ENCODE measurements at regions of chr12 and their contacts with region 1.

Region 1: DNA sequence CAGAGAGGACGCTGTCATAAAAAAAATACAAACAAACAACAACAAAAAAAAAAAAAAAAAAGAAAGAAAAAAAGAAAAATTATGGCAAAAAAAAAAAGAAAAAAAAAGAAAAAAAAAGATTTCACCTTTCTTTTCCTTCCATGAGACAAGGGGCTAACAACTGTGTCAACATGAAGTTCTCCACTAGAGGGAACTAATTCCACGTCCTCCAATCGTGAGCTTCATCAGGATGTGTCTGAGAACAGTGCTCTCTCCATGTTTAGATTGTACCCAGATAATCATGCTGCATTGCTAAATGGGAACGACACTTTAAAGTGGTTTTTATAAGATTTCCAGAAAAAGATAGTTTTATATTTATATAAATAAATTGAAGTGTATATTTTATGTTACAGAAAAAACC is 96.2 kb upstream of the PTPRB start:
- DNase-seq: no peak
- H3K4me3 ChIP-seq: no peak overlapping the region
- H3K27me3 ChIP-seq: peaks cover 1% of the 10 kb centered on the region; the same call in 1 of the 2 replicates
- CTCF ChIP-seq: peak; percentile 73

Region 2: GRCh38 chr12:69879041-69879960 is 854.1 kb before region 1 on chr12:
- CTCF ChIA-PET with region 1: interaction called, 58 read pairs
- POLR2A ChIA-PET with region 1: no interaction called
- DNase-seq: no peak
- H3K4me3 ChIP-seq: peak overlapping the region; percentile 8; the same call in 1 of the 2 replicates
- H3K27me3 ChIP-seq: no peaks in the 10 kb centered on the region
- CTCF ChIP-seq: peak; percentile 87

Region 3: GRCh38 chr12:70590051-70590450 is 143.3 kb before region 1 on chr12:
- CTCF ChIA-PET with region 1: interaction called, 10 read pairs
- POLR2A ChIA-PET with region 1: no interaction called
- DNase-seq: no peak
- H3K4me3 ChIP-seq: no peak overlapping the region
- H3K27me3 ChIP-seq: no peaks in the 10 kb centered on the region
- CTCF ChIP-seq: peak; percentile 91

Region 4: DNA sequence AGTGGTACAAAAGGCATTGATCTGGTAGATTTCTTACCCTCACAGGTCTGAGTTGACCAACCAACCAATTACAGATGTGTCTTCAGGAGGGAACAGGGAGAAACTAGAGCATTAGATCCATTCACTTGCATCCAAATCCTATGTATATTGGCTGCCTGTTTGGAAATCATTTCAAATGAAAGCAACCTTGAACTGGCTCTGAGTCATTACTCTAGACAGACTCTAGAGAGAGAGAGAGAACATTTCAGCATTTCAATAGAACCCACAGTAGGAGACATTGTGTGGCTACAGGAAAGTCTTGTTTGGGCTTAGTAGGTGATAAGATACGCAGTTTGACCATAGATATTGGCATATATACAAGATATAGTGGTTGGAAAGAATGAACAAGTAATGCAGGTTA is 72.7 kb after region 1 on chr12:
- CTCF ChIA-PET with region 1: no interaction called
- POLR2A ChIA-PET with region 1: no interaction called
- DNase-seq: no peak
- H3K4me3 ChIP-seq: no peak overlapping the region
- H3K27me3 ChIP-seq: no peaks in the 10 kb centered on the region
- CTCF ChIP-seq: no peak

Region 5: GRCh38 chr12:70849265-70849960 is 116.0 kb after region 1 on chr12:
- CTCF ChIA-PET with region 1: interaction called, 25 read pairs
- POLR2A ChIA-PET with region 1: no interaction called
- DNase-seq: no peak
- H3K4me3 ChIP-seq: no peak overlapping the region
- H3K27me3 ChIP-seq: no peaks in the 10 kb centered on the region
- CTCF ChIP-seq: peak; percentile 42; the same call in 1 of the 2 replicates

Region 6: DNA sequence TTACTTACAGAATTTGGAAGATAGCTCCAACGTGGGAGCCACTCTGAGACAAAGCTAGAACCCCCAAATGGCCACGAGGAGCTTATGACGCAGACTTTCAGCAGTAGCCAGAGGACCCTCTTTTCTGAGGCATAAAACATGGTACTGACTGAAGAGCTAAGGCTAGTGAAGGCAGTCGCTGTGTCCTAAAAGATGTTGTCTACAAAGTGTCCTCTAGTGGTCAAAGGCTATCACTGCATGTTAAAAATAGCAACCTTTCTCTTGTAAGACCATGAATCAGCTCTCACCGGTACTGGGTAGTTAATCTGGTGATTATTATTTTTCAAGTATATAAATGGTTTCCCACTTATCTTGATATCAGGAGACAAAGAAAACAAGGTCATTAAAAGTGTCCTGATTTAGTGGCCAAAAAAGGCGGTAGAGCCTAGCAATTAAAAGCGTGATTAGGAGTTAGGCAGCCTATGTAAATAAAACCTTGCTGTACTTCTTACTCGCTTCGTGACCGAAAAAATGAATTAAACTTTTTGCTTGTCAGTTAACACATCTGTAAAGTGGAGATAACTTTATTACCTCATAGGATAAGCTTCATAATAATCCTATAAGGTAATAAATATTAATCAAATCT is 659.2 kb after region 1 on chr12:
- CTCF ChIA-PET with region 1: interaction called, 27 read pairs
- POLR2A ChIA-PET with region 1: no interaction called
- DNase-seq: peak; percentile 19
- H3K4me3 ChIP-seq: no peak overlapping the region
- H3K27me3 ChIP-seq: no peaks in the 10 kb centered on the region
- CTCF ChIP-seq: peak; percentile 85